ENCODE measurements at regions of chr1 and their contacts with region 1.

Region 1: GRCh38 chr1:112390775-112391602 is 5.0 kb upstream of the CTTNBP2NL start:
- DNase-seq: peak; percentile 85
- CTCF ChIP-seq: peak; percentile 85

Region 2: DNA sequence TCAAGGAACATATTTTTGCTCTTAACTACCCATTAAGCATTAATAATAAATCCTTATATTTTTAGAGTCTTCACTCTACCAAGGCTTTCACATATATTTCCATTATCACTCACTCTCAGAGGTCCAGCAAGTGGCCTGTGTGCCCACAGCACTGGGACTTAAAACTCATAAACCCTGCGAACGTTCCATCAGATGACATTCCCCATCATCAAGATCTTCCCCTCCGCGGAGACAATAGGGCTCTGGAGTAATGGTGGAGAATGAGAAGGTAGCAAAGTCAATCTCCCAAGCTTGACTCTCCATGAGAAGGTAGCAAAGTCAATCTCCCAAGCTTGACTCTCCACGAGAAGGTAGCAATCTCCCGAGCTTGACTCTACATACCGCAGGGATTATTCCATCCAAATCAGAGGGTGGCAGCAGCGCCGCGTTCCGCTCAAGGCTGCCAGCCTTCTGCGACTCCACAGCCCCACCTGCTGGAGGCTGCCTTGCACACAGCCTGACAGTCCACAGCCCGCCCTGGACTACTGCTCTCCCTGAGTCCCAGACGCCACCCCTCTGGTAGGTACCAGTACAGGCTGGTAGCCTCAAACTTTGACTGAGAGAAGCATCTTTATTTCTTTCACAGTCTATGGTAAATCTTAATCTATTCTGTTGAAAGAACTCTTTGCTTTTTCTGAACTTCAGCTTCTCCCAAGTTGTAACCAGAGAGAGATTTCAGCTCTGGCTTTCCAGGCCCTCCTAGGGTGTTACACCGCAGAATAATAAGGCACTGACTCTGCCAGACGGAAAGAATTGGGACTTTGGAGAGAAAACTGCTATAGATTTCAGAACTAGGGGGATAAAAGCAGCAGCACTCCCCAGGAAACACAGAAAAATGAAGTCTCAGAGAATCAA is 21.4 kb before region 1 on chr1:
- CTCF ChIA-PET with region 1: interaction called, 28 read pairs
- POLR2A ChIA-PET with region 1: no interaction called
- DNase-seq: peak; percentile 81
- CTCF ChIP-seq: peak; percentile 99

Region 3: DNA sequence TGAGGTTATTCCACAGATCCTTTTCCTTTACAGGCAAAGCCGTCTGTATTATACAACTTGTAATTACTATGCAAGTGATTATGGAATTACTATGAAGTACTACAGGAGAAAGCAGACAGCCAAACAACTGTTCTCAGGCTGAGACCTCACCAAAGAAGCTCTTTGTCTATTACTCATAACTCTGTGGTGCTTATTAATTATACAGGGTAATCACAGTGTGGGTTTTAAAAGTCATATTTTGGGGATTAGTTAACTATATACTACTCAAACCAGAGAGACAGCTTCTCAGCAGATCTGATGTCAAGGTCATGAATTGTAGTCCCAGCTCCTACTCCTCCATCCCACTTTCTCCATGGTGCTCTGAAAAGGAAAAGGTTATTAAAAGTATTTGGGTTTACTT is 54.6 kb after region 1 on chr1:
- CTCF ChIA-PET with region 1: interaction called, 13 read pairs
- POLR2A ChIA-PET with region 1: no interaction called
- DNase-seq: no peak
- CTCF ChIP-seq: no peak

Region 4: GRCh38 chr1:112477550-112477949 is 86.6 kb after region 1 on chr1:
- CTCF ChIA-PET with region 1: interaction called, 10 read pairs
- POLR2A ChIA-PET with region 1: no interaction called
- DNase-seq: no peak
- CTCF ChIP-seq: no peak

Region 5: GRCh38 chr1:112614460-112615065 is 223.6 kb after region 1 on chr1:
- CTCF ChIA-PET with region 1: interaction called, 73 read pairs
- POLR2A ChIA-PET with region 1: interaction called, 3 read pairs
- DNase-seq: no peak
- CTCF ChIP-seq: peak; percentile 61

Region 6: GRCh38 chr1:112700290-112701226 is 309.6 kb after region 1 on chr1:
- CTCF ChIA-PET with region 1: interaction called, 15 read pairs
- POLR2A ChIA-PET with region 1: interaction called, 9 read pairs
- DNase-seq: peak; percentile 79
- CTCF ChIP-seq: no peak

Region 7: GRCh38 chr1:112715264-112716053 is 324.5 kb after region 1 on chr1 and contains the start of gene PPM1J:
- CTCF ChIA-PET with region 1: interaction called, 105 read pairs
- POLR2A ChIA-PET with region 1: interaction called, 4 read pairs
- DNase-seq: peak; percentile 97
- CTCF ChIP-seq: no peak

Measured in GM10248 (cell line).